Common myeloid progenitor, CD34-positive (primary cell): ENCODE measurements at regions of chr4 and their contacts with region 1.

Region 1: DNA sequence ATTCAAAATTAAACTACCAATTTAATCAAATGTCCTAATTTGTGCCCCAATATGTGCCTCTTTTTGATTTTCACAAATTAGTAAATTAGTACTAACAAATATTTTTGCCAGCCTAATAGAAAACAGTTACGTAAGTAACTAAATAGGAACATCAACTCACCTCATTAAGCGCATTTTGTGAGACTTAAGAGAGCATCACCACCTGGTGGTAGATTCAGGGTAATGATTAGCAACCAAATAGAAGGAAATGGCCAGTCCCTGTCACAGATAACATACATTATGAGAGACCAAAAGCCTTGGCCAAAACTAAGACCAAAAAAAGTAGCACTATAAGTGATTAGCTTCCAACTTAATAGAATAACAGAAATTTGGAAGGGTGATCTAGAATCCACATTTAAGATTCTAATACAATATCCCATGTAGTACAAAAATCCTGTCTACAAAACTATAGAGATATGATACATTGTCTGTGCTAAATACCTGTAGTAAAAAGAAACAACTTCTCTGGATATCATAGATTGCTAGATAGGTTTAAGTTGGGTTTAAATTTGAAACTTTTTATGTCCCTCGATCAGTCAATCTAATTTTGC is 46.7 kb downstream of the C4orf46 start:
- DNase-seq: peak; percentile 72 to 81 (median 79)
- H3K4me3 ChIP-seq: peak overlapping the region in 1 of 7 experiments; percentile 35
- H3K27ac ChIP-seq: no peak overlapping the region
- H3K4me1 ChIP-seq: peaks cover 0 to 5% (median 0%) of the 10 kb centered on the region in 4 experiments
- H3K27me3 ChIP-seq: no peaks in the 10 kb centered on the region

Region 2: GRCh38 chr4:158193171-158193749 is 431.7 kb before region 1 on chr4:
- CTCF ChIA-PET with region 1: interaction called, 11 read pairs
- POLR2A ChIA-PET with region 1: no interaction called
- DNase-seq: peak; percentile 47 to 61 (median 54)
- H3K4me3 ChIP-seq: peak overlapping the region in 1 of 7 experiments; percentile 55
- H3K27ac ChIP-seq: no peak overlapping the region
- H3K4me1 ChIP-seq: peaks cover 0 to 3% (median 0%) of the 10 kb centered on the region in 4 experiments
- H3K27me3 ChIP-seq: no peaks in the 10 kb centered on the region

Region 3: GRCh38 chr4:158253350-158253980 is 371.5 kb before region 1 on chr4:
- CTCF ChIA-PET with region 1: interaction called, 37 read pairs
- POLR2A ChIA-PET with region 1: no interaction called
- DNase-seq: peak; percentile 78 to 89 (median 88)
- H3K4me3 ChIP-seq: peak overlapping the region in 3 of 7 experiments; percentile 11 to 49 (median 46)
- H3K27ac ChIP-seq: peak overlapping the region in 1 of 2 experiments; percentile 35
- H3K4me1 ChIP-seq: peaks cover 15 to 39% (median 21%) of the 10 kb centered on the region in 4 experiments
- H3K27me3 ChIP-seq: no peaks in the 10 kb centered on the region

Region 4: DNA sequence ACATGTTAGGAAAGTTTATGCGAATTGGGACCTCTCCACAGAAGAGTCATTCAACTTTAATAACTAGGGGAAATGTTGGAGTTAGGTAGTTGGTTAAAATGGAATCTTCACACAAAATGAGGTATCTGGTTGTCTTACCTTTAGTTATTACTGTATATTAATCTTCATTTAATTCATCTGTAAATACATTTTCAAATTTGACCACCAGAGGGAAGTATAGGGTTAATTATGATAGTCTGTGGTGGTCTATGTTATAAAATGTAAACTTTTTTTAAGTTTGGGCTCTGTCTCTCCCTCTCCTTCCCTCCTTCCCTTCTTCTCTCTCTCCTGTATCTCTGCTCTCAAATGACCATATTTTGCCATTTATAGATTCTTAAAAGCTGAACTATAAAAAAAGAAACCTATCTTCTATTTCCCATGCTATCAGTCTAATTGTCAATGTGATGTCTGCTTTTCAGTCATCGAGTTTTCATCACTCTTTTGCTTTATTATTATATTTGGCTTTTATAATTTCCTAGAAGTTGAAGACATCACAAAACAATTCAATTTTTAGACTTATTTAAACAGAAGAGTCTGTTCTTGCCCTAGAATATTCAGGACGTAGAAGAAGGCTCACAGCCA is 364.9 kb before region 1 on chr4:
- CTCF ChIA-PET with region 1: interaction called, 37 read pairs
- POLR2A ChIA-PET with region 1: no interaction called
- DNase-seq: peak; percentile 52 to 69 (median 61)
- H3K4me3 ChIP-seq: no peak overlapping the region
- H3K27ac ChIP-seq: no peak overlapping the region
- H3K4me1 ChIP-seq: peaks cover 0 to 5% (median 0%) of the 10 kb centered on the region in 4 experiments
- H3K27me3 ChIP-seq: no peaks in the 10 kb centered on the region